Caco-2 (cell line): ENCODE measurements at regions of chr7 and their contacts with region 1.

Region 1: GRCh38 chr7:84025332-84025927 is 169.2 kb downstream of the SEMA3A start:
- DNase-seq: peak; percentile 75 to 86
- H3K4me3 ChIP-seq: no peak overlapping the region
- H3K4me3 Mint-ChIP-seq: no peak overlapping the region
- H3K27ac Mint-ChIP-seq: peak overlapping the region; percentile 84
- H3K4me1 ChIP-seq: peaks cover 70% of the 10 kb centered on the region
- H3K4me1 Mint-ChIP-seq: peaks cover 31% of the 10 kb centered on the region
- H3K27me3 ChIP-seq: no peaks in the 10 kb centered on the region
- H3K27me3 Mint-ChIP-seq: no peaks in the 10 kb centered on the region
- CTCF ChIP-seq: no peak

Region 2: GRCh38 chr7:83957333-83957732 is 68.1 kb before region 1 on chr7:
- CTCF ChIA-PET with region 1: no interaction called
- POLR2A ChIA-PET with region 1: no interaction called
- intact Hi-C with region 1: loop called (anchors 1 kb)
- DNase-seq: peak in 1 of 2 experiments; percentile 21
- H3K4me3 ChIP-seq: no peak overlapping the region
- H3K4me3 Mint-ChIP-seq: no peak overlapping the region
- H3K27ac Mint-ChIP-seq: peak overlapping the region; percentile 43
- H3K4me1 ChIP-seq: peaks cover 22% of the 10 kb centered on the region
- H3K4me1 Mint-ChIP-seq: peaks cover 11% of the 10 kb centered on the region
- H3K27me3 ChIP-seq: no peaks in the 10 kb centered on the region
- H3K27me3 Mint-ChIP-seq: no peaks in the 10 kb centered on the region
- CTCF ChIP-seq: no peak

Region 3: GRCh38 chr7:84009051-84009450 is 16.4 kb before region 1 on chr7:
- CTCF ChIA-PET with region 1: no interaction called
- POLR2A ChIA-PET with region 1: no interaction called
- intact Hi-C with region 1: no loop called
- DNase-seq: no peak
- H3K4me3 ChIP-seq: no peak overlapping the region
- H3K4me3 Mint-ChIP-seq: no peak overlapping the region
- H3K27ac Mint-ChIP-seq: no peak overlapping the region
- H3K4me1 ChIP-seq: peaks cover 4% of the 10 kb centered on the region
- H3K4me1 Mint-ChIP-seq: peaks cover 15% of the 10 kb centered on the region
- H3K27me3 ChIP-seq: no peaks in the 10 kb centered on the region
- H3K27me3 Mint-ChIP-seq: no peaks in the 10 kb centered on the region
- CTCF ChIP-seq: no peak

Region 4: GRCh38 chr7:84043661-84044191 is 18.3 kb after region 1 on chr7:
- CTCF ChIA-PET with region 1: no interaction called
- POLR2A ChIA-PET with region 1: no interaction called
- intact Hi-C with region 1: loop called (anchors 1 kb)
- DNase-seq: no peak
- H3K4me3 ChIP-seq: no peak overlapping the region
- H3K4me3 Mint-ChIP-seq: no peak overlapping the region
- H3K27ac Mint-ChIP-seq: peak overlapping the region; percentile 58
- H3K4me1 ChIP-seq: peaks cover 70% of the 10 kb centered on the region
- H3K4me1 Mint-ChIP-seq: peaks cover 48% of the 10 kb centered on the region
- H3K27me3 ChIP-seq: no peaks in the 10 kb centered on the region
- H3K27me3 Mint-ChIP-seq: no peaks in the 10 kb centered on the region
- CTCF ChIP-seq: no peak

Region 5: DNA sequence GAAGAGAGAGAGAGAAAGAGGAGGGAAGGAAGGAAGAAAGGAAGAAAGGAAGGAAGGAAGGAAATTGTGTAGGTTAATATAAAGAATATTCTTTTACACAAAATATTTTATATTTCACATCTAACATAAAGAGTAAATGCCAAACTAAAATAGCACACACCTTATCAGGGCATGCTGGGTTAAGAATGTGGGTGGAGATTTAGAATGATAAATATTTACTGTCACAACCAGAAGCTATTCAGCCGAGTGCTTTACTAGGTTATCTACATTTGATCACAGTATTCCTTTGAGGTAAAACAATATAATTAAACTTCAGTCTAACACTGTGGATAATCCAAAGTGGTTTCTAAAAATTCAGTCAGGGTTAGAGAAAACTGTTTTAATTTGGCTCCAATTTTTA is 65.9 kb after region 1 on chr7:
- CTCF ChIA-PET with region 1: no interaction called
- POLR2A ChIA-PET with region 1: no interaction called
- intact Hi-C with region 1: loop called (anchors 1 kb)
- DNase-seq: peak in 1 of 2 experiments; percentile 43
- H3K4me3 ChIP-seq: no peak overlapping the region
- H3K4me3 Mint-ChIP-seq: peak overlapping the region; percentile 69
- H3K27ac Mint-ChIP-seq: peak overlapping the region; percentile 96
- H3K4me1 ChIP-seq: peaks cover 74% of the 10 kb centered on the region
- H3K4me1 Mint-ChIP-seq: peaks cover 54% of the 10 kb centered on the region
- H3K27me3 ChIP-seq: no peaks in the 10 kb centered on the region
- H3K27me3 Mint-ChIP-seq: no peaks in the 10 kb centered on the region
- CTCF ChIP-seq: no peak

Region 6: DNA sequence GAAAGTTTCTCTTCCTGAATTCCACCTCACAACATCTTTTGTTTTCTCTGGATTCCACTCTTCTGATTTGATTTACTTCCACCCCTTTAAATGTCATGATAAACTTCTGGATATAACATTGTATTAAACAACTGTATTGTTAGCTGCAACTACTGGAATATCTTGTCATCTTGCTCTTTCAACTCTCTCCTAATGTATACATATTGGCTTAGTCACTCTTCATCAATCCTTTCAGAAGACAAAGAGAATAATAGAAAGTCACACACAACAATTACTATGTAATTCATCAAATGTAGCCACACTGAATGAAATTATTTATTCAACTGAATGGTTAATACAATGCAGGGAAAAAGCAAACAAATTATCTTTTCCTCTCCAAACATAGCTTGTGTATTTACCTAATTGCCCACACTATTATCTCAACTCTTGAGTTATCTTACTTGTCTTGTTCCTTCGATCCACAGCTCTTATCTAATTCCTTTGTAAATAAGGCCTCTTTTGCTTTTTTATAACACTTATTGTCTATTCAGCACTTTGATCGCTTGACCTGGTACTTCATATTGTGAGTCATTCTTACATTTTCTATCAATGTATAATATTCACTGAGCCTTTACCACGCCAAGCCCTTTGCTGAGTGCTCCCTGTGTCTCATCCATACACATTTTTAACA is 152.4 kb after region 1 on chr7:
- CTCF ChIA-PET with region 1: no interaction called
- POLR2A ChIA-PET with region 1: no interaction called
- intact Hi-C with region 1: loop called (anchors 1 kb)
- DNase-seq: peak in 1 of 2 experiments; percentile 24
- H3K4me3 ChIP-seq: no peak overlapping the region
- H3K4me3 Mint-ChIP-seq: no peak overlapping the region
- H3K27ac Mint-ChIP-seq: no peak overlapping the region
- H3K4me1 ChIP-seq: peaks cover 20% of the 10 kb centered on the region
- H3K4me1 Mint-ChIP-seq: no peaks in the 10 kb centered on the region
- H3K27me3 ChIP-seq: no peaks in the 10 kb centered on the region
- H3K27me3 Mint-ChIP-seq: no peaks in the 10 kb centered on the region
- CTCF ChIP-seq: no peak

Region 7: GRCh38 chr7:84529480-84530205 is 504.2 kb after region 1 on chr7:
- CTCF ChIA-PET with region 1: interaction called, 3 read pairs
- POLR2A ChIA-PET with region 1: no interaction called
- intact Hi-C with region 1: loop called (anchors 1 kb)
- DNase-seq: peak; percentile 77 to 81
- H3K4me3 ChIP-seq: no peak overlapping the region
- H3K4me3 Mint-ChIP-seq: no peak overlapping the region
- H3K27ac Mint-ChIP-seq: peak overlapping the region; percentile 56
- H3K4me1 ChIP-seq: peaks cover 31% of the 10 kb centered on the region
- H3K4me1 Mint-ChIP-seq: peaks cover 36% of the 10 kb centered on the region
- H3K27me3 ChIP-seq: no peaks in the 10 kb centered on the region
- H3K27me3 Mint-ChIP-seq: no peaks in the 10 kb centered on the region
- CTCF ChIP-seq: no peak